Left ventricle myocardium inferior (tissue), 1 donor: ENCODE measurements at regions of chr20 and their contacts with region 1.

Region 1: GRCh38 chr20:41509316-41510200 is 108.6 kb downstream of the CHD6 start:
- DNase-seq: peak; percentile 52
- H3K4me3 ChIP-seq: no peak overlapping the region
- H3K27ac ChIP-seq: peak overlapping the region; percentile 73
- H3K4me1 ChIP-seq: peaks cover 67% of the 10 kb centered on the region
- H3K27me3 ChIP-seq: no peaks in the 10 kb centered on the region
- CTCF ChIP-seq: no peak

Region 2: DNA sequence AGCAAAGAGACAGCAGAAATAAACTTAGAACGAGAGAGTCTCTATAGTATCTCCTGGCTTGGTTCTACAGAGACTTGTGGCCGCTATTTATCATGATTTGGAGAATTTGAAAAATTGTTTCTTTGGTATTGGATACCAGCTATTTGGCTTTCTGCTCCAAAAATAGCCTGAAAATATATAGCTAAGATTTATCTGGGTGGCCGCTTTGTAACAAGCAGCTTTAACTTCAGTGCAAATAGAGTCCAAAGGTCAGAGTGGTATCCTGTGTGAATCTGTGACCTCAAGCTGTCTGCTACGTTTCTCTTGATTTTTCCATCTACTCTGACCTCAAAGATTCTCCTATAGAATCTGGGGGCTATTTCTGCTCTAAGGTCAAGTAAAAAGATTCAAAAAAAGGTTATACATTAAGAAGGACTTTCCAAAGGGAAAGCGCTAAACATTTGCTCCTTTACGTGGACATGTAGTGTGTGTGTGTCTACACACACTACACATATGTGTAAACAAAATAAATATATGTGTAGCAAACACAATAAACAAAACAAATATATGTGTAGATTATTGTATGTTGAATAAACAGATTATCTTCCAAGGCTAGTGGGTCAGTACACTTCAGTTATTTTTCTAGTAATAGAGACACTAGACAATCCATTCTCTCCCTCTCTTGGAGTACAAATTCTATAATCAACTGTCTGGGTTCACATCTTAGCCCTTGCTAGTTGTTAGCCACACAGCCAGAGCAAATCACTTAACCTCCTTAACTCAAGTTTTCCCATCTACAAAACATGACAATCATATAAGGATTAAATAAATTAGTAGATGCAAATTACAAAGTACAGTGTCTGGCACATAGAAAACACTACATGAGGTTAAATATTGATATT is 67.8 kb after region 1 on chr20:
- intact Hi-C with region 1: no loop called
- DNase-seq: no peak
- H3K4me3 ChIP-seq: no peak overlapping the region
- H3K27ac ChIP-seq: no peak overlapping the region
- H3K4me1 ChIP-seq: peaks cover 76% of the 10 kb centered on the region
- H3K27me3 ChIP-seq: no peaks in the 10 kb centered on the region
- CTCF ChIP-seq: no peak

Region 3: DNA sequence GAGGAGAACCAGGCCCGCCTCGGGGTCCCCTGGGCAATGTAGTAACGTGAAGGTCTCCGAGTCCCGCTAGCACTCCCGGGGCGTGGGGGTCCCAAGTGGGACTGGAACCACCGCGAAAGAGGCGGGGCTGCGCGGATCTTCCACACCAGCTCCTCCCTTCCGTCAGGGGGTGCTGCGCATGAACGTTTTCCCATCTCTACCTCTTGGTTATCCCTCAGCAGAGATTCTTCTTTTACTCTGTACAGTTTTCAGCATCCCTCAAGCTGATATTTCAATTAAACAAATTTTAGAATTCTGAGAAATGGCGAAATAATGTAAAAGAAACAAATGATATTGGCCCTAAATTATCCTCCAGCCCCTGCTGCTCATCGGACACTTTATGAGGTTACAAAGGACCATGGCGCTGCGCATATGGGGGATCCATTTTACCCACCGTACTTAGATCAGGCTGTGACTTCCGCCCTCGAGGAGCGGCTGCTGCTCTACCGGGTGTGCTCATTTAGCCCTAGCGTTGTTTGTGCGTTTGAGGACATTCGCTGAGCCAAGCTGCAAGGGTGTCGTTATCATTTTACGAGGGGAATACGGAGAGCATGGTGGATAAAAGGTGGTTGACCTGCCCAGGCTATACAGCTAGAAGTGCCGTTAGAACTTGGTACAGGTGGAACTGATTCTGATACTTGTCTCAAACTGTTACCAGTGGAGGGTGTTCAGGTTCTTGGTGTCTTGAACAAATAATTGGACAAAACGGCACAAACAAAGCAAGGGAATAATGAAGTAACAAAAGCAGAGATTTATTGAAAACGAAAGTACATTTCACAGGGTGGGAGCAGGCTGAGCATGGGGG is 183.8 kb after region 1 on chr20:
- intact Hi-C with region 1: loop called (anchors 10 kb)
- DNase-seq: peak; percentile 78
- H3K4me3 ChIP-seq: peak overlapping the region; percentile 79
- H3K27ac ChIP-seq: peak overlapping the region; percentile 94
- H3K4me1 ChIP-seq: peaks cover 18% of the 10 kb centered on the region
- H3K27me3 ChIP-seq: no peaks in the 10 kb centered on the region
- CTCF ChIP-seq: peak; percentile 69